ENCODE measurements at regions of chr11 and their contacts with region 1.

Region 1: DNA sequence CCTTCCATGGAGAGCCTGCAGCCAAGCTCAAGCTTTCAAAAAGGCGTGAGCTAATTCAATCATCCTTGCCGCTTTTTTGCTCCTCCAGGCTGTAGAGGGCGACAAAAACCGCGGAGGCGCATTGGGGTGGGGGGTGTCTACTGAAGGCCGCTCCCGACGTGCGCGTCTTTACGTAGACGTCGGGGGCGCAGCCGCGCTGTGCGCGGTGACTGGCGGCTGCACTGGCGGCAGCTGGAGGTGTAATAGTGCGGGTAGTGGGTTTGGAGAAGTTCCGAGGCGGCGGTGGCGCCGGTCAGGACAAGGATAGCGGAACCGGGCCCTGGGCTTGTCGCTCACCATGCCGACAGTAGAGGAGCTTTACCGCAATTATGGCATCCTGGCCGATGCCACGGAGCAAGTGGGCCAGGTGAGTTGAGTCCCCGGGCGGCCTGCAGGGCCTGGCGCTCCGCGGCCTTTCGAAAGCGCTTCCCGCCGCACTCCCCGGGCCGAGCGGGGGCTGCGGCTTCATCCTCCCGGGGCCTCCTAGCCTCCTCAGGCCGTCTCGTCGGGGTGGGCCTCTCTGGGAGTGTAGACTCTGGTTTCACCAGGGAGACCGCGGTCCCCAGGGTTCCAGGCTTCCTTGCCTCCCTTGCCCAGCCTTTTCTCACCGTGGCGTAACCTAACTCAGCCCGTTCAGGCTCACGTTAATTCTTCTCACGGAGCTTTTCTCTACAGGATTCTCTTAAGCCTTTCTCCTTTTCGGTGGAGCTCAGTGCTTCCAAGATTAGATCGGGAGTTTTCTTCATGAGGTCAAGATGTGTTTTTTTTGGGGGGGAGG is at the start of gene API5:
- DNase-seq: peak; percentile 88
- ATAC-seq: peak; percentile 98
- H3K4me3 Mint-ChIP-seq: peak within 1 kb of the TSS; percentile 98
- H3K27ac Mint-ChIP-seq: peak within 1 kb of the TSS; percentile 89
- H3K4me1 Mint-ChIP-seq: peaks cover 47% of the 10 kb centered on the region
- H3K27me3 Mint-ChIP-seq: no peaks in the 10 kb centered on the region
- CTCF ChIP-seq: no peak
- total RNA-seq, gene API5: 122 and 123 TPM in 2 replicates

Region 2: GRCh38 chr11:42823546-42823945 is 488.5 kb before region 1 on chr11:
- CTCF ChIA-PET with region 1: no interaction called
- POLR2A ChIA-PET with region 1: no interaction called
- intact Hi-C with region 1: no loop called
- DNase-seq: no peak
- ATAC-seq: no peak
- H3K4me3 Mint-ChIP-seq: no peak overlapping the region
- H3K27ac Mint-ChIP-seq: no peak overlapping the region
- H3K4me1 Mint-ChIP-seq: no peaks in the 10 kb centered on the region
- H3K27me3 Mint-ChIP-seq: no peaks in the 10 kb centered on the region
- CTCF ChIP-seq: no peak

Region 3: DNA sequence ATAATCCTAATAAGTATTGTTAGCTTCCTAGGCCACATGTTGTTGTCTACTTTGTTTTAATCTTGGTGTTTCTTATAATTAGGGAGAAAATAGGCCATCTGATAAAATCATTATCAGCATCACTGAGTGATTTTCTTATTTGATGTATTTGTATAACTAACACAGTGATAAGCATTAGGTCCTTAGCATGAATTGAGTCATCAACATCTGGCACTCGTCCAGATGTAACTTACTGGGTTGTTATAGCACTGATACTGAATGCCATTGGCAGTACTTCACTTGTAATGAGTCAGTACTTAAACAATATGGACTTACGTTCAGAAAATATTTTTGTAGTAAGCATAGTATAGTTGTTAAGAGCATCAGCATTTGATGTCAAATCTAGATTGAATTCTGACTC is 16.0 kb after region 1 on chr11:
- CTCF ChIA-PET with region 1: interaction called, 3 read pairs
- POLR2A ChIA-PET with region 1: interaction called, 4 read pairs
- intact Hi-C with region 1: loop called (anchors 2 kb)
- DNase-seq: no peak
- ATAC-seq: no peak
- H3K4me3 Mint-ChIP-seq: no peak overlapping the region
- H3K27ac Mint-ChIP-seq: no peak overlapping the region
- H3K4me1 Mint-ChIP-seq: no peaks in the 10 kb centered on the region
- H3K27me3 Mint-ChIP-seq: no peaks in the 10 kb centered on the region
- CTCF ChIP-seq: no peak

Region 4: DNA sequence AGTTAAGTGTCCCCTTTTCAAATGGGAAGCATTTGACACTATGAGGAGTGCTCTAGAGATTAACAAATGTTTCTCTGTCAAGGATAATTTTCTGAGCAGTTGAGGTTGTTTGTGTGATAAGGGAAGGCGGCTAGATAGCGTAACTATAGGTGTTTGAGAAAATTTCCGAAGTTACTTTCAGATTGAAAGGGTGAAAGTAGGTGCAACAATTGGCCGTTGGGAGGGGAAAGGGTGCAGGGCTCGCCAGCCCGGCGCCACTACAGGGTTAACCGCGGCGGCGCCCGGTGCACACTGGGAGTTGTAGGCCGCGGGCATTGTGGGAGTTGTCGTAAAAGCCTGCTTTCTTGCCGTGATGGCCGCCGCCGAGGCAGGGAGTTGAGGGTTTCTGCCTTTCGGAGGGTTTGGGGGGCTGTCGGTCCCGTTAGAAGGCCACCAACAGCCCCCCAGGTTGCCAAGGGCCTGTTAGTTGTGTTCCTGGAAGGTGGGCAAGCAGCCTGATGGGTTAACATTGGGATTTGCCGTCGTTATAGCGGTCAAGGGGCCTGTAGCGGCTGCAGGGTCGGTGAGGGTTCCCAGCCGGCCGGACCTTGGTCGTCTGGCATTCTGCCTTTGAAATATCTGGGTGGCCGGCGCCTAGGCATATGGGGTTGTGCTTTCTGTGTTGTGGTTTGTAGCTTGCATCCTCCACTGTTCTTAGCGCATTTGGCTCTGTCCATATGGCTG is 332.1 kb after region 1 on chr11:
- CTCF ChIA-PET with region 1: no interaction called
- POLR2A ChIA-PET with region 1: no interaction called
- intact Hi-C with region 1: loop called (anchors 1 kb)
- DNase-seq: peak; percentile 84
- ATAC-seq: peak; percentile 100
- H3K4me3 Mint-ChIP-seq: peak overlapping the region; percentile 96
- H3K27ac Mint-ChIP-seq: peak overlapping the region; percentile 89
- H3K4me1 Mint-ChIP-seq: peaks cover 14% of the 10 kb centered on the region
- H3K27me3 Mint-ChIP-seq: peaks cover 10% of the 10 kb centered on the region
- CTCF ChIP-seq: no peak

Region 5: GRCh38 chr11:43680521-43681400 is 368.8 kb after region 1 on chr11 and contains the start of gene HSD17B12:
- CTCF ChIA-PET with region 1: interaction called, 3 read pairs
- POLR2A ChIA-PET with region 1: interaction called, 5 read pairs
- intact Hi-C with region 1: loop called (anchors 1 kb)
- DNase-seq: peak; percentile 96
- ATAC-seq: peak; percentile 96
- H3K4me3 Mint-ChIP-seq: peak within 1 kb of the TSS; percentile 93
- H3K27ac Mint-ChIP-seq: peak within 1 kb of the TSS; percentile 92
- H3K4me1 Mint-ChIP-seq: peaks cover 38% of the 10 kb centered on the region
- H3K27me3 Mint-ChIP-seq: no peaks in the 10 kb centered on the region
- CTCF ChIP-seq: no peak
- total RNA-seq, gene HSD17B12: 56.8 and 58.3 TPM in 2 replicates

Region 6: GRCh38 chr11:43880640-43881159 is 568.7 kb after region 1 on chr11 and contains the start of gene ALKBH3:
- CTCF ChIA-PET with region 1: interaction called, 3 read pairs
- POLR2A ChIA-PET with region 1: no interaction called
- intact Hi-C with region 1: loop called (anchors 5 kb)
- DNase-seq: peak; percentile 83
- ATAC-seq: peak; percentile 99
- H3K4me3 Mint-ChIP-seq: peak within 1 kb of the TSS; percentile 94
- H3K27ac Mint-ChIP-seq: peak within 1 kb of the TSS; percentile 74
- H3K4me1 Mint-ChIP-seq: peaks cover 20% of the 10 kb centered on the region
- H3K27me3 Mint-ChIP-seq: peaks cover 32% of the 10 kb centered on the region
- CTCF ChIP-seq: no peak
- total RNA-seq, gene ALKBH3: 28.3 and 40.5 TPM in 2 replicates

Region 7: DNA sequence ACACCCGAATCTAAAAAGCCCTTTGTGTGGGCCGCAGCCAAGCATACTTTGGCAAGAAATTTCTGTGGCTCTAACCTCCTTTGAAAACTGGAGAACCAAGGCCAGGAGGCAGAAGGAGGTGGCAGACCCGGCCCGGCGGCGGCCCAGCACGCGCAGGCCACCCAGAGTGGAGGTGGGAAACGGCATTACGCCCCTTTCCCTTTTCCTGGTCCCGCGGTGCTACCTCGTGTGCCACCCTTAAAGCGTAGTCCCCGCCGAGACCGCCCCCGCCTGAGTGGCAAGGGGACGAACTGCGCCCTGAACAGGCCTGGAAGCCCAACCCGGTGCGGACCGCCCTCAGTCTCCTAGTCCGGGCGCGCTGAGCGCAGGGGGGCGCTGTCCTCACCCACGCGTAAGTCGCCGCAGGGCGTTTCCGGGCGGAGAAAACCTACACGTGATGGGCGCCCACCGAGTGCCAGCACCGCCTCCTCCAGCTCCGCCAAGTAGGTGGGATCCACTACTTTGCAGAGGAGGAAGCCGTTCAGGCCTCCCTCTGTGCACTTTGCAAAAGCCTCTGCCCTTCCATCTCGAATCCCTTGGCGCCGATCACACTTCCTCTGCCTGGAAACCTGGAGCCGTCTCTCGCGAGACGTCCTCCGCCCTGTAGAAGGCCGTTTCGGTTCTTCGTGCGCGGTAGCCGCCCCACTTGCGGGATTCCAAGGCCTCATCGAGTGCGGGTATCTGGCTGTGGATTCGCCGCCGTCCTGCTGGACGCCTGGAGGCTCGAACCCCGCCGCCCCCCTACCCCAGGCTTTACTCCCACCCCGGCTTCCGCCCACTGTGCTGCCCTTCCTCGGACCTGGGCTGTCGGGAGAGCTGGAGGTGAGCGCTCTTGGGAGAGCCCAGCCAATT is 754.1 kb after region 1 on chr11 and contains the start of gene ACCS:
- CTCF ChIA-PET with region 1: no interaction called
- POLR2A ChIA-PET with region 1: no interaction called
- intact Hi-C with region 1: loop called (anchors 10 kb)
- DNase-seq: peak; percentile 86
- ATAC-seq: peak; percentile 97
- H3K4me3 Mint-ChIP-seq: peak within 1 kb of the TSS; percentile 92
- H3K27ac Mint-ChIP-seq: peak within 1 kb of the TSS; percentile 87
- H3K4me1 Mint-ChIP-seq: peaks cover 19% of the 10 kb centered on the region
- H3K27me3 Mint-ChIP-seq: no peaks in the 10 kb centered on the region
- CTCF ChIP-seq: peak; percentile 58
- total RNA-seq, gene ACCS: 22.4 and 27.0 TPM in 2 replicates

Measured in activated B cell treated with CpG ODN at 0.5 μM for 24 hours (primary cell).